ENCODE measurements at regions of chr2 and their contacts with region 1.

Region 1: DNA sequence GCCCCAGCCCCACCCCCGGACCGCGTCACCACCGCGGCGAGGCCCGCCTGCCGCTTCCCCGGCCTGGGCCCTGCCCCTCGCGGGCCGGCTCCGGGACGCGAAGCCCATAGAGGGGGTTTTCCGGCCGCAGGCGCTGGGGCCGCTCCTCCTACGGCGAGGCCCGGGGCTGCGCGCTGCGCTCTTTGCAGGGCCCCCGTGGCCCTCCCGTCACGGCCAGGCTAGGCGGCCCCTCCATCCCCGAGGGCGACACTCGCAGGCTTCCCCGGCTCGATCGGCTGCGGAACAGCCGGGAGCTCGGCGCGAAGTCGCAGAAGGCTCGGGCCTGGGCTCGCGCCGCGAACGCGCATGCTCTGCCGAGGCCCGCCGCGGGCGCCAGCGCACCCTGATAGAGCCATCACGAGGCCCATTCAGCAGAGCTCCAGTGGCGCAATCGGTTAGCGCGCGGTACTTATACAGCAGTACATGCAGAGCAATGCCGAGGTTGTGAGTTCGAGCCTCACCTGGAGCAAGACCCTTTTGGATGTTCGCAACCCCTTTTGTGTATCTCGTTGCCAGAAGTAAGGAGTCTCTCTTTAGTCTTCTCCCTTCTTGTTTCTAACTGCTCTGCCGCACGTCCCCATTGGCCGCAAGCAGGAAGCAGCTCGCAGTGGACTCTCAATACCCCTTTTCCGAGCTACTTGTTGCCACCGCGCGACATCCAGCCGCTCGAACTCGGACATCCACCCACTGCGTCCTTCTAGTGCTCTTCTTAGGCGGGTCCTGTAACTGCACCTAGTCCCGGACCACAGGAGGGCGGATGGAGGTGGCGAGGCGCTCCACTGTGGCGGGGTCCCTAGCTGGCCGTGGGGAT is 18.0 kb upstream of the HAAO start:
- DNase-seq: peak; percentile 99
- ATAC-seq: peak; percentile 83
- H3K4me3 Mint-ChIP-seq: peak overlapping the region; percentile 97
- H3K27ac Mint-ChIP-seq: peak overlapping the region; percentile 100
- H3K4me1 Mint-ChIP-seq: peaks cover 17% of the 10 kb centered on the region
- H3K27me3 Mint-ChIP-seq: peaks cover 12% of the 10 kb centered on the region

Region 2: GRCh38 chr2:42673989-42674579 is 136.3 kb before region 1 on chr2:
- POLR2A ChIA-PET with region 1: no interaction called
- DNase-seq: no peak
- ATAC-seq: no peak
- H3K4me3 Mint-ChIP-seq: no peak overlapping the region
- H3K27ac Mint-ChIP-seq: no peak overlapping the region
- H3K4me1 Mint-ChIP-seq: peaks cover 8% of the 10 kb centered on the region
- H3K27me3 Mint-ChIP-seq: no peaks in the 10 kb centered on the region

Region 3: DNA sequence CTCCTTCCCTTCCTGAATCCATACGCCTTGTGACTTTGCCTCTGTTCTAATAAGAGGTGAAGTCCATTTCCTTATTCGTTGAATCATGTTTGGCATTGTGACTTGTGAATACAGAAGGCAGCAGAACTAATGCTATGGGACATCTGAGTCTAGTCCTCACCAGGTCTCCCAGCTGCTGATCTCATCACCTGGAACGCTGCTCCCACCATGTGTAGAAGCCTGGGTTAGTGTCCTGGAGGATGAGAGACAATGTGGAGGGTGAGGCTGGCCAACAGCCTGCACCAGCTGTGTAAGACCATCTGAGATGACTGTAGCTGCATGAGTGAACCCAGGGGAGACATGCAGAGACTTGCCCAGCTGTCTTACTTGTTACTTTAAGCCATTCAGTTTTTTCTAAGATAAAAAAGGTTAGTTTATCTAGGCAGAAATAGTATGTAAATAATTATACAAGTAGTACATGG is 14.5 kb before region 1 on chr2:
- POLR2A ChIA-PET with region 1: interaction called, 19 read pairs
- DNase-seq: no peak
- ATAC-seq: no peak
- H3K4me3 Mint-ChIP-seq: no peak overlapping the region
- H3K27ac Mint-ChIP-seq: no peak overlapping the region
- H3K4me1 Mint-ChIP-seq: peaks cover 21% of the 10 kb centered on the region
- H3K27me3 Mint-ChIP-seq: peaks cover 31% of the 10 kb centered on the region

Region 4: GRCh38 chr2:42928692-42929545 is 118.6 kb after region 1 on chr2:
- POLR2A ChIA-PET with region 1: no interaction called
- DNase-seq: no peak
- ATAC-seq: no peak
- H3K4me3 Mint-ChIP-seq: no peak overlapping the region
- H3K27ac Mint-ChIP-seq: no peak overlapping the region
- H3K4me1 Mint-ChIP-seq: peaks cover 5% of the 10 kb centered on the region
- H3K27me3 Mint-ChIP-seq: peaks cover 2% of the 10 kb centered on the region

Region 5: GRCh38 chr2:43239981-43240761 is 429.8 kb after region 1 on chr2:
- POLR2A ChIA-PET with region 1: no interaction called
- DNase-seq: no peak
- ATAC-seq: no peak
- H3K4me3 Mint-ChIP-seq: no peak overlapping the region
- H3K27ac Mint-ChIP-seq: no peak overlapping the region
- H3K4me1 Mint-ChIP-seq: peaks cover 3% of the 10 kb centered on the region
- H3K27me3 Mint-ChIP-seq: no peaks in the 10 kb centered on the region

Region 6: DNA sequence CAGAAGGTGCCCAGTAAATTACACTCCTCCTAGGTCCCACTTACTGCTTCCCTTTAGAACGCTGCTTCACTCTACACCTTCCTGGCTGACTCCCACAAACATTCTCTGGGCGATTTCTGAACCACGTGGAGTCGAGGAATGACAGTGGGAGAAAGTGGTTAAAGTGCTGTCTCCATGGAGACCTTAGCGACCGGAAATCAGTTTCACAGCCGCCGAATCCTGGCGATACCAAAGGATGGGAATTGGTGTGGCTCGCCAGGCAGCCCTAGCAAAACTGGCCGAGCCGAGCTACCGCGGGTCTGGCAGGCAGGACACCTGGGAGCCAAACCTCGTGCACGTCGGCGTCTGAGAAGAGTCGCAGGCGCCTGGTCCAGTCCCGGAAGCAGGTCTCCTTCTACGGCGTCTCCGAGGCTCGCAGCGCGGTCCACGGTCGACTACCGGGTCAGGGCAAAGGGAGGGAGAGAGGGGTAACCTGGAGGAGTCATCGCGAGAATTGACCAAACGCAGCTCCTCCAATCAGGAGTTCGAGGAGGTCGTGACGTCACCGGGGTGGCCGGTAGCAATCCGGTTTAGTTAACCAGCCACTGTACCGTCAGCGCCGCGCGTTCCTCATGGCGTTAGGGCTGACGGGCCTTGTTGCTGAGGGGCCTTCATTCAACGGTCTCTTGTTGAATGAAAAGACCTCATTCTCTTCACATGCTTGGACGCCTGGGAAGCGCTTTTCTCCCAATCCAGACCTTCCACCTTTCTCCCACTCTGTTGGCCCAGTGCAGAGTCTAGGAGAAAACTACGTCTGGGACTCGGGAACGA is 785.5 kb after region 1 on chr2 and contains the start of gene THADA:
- POLR2A ChIA-PET with region 1: interaction called, 13 read pairs
- DNase-seq: peak; percentile 93
- ATAC-seq: peak; percentile 98
- H3K4me3 Mint-ChIP-seq: peak within 1 kb of the TSS; percentile 92
- H3K27ac Mint-ChIP-seq: peak within 1 kb of the TSS; percentile 94
- H3K4me1 Mint-ChIP-seq: peaks cover 15% of the 10 kb centered on the region
- H3K27me3 Mint-ChIP-seq: no peaks in the 10 kb centered on the region
- total RNA-seq, gene THADA: 30.5 to 30.8 TPM

Measured in activated naive CD8-positive, alpha-beta T cell treated with anti-CD3 and anti-CD28 coated beads, Interleukin-2, amount 10 ng/mL, durations not matched to agents 7 days and 5 days (primary cell).